A673 (cell line): ENCODE measurements at regions of chr17 and their contacts with region 1.

Region 1: DNA sequence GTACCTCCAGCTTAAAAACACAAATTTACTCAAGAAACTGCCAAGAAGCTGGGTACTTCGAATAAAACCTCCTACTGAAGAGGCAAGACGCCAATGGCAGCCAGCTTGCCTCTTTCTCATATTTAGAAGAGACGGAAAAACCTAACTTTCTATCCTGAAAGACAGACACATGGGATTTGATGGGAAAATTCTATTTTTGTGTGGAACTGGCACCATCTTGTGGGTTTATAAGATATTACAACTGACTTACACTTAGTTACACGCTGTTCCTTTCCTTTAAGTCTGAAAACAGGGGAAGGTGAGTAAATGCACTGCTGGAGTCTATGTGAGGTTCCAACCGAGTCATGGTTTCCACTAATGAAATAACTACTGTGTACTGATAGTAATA is 10.3 kb downstream of the ZNF18 start:
- DNase-seq: peak; percentile 69
- H3K4me3 ChIP-seq: no peak overlapping the region
- H3K27ac ChIP-seq: no peak overlapping the region
- H3K4me1 ChIP-seq: peaks cover 10% of the 10 kb centered on the region
- H3K27me3 ChIP-seq: no peaks in the 10 kb centered on the region
- CTCF ChIP-seq: peak; percentile 63

Region 2: DNA sequence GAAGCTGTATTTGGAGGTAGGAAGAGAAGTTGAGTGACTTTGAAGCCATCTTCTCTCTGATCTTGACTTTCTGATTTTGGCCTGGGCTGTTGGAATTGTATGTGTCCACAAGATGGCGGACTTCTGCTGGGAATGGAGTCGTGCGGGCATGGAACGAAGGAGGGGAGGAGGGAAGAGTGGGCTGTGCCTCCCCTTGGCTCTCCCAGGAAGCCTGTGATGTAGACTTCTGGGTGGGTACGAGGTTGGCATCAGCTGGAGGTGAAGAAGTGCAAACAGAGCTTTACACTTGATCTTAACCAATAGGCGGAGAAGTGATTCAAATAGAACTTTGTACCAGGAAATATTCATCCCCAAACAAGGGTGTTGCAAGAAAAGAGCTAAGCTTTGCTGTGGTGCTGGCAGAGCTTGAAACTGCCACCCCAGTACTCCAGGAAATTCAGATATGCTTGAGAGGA is 1249.7 kb before region 1 on chr17:
- CTCF ChIA-PET with region 1: no interaction called
- POLR2A ChIA-PET with region 1: no interaction called
- intact Hi-C with region 1: loop called (anchors 5 kb)
- DNase-seq: peak; percentile 79
- H3K4me3 ChIP-seq: no peak overlapping the region
- H3K27ac ChIP-seq: no peak overlapping the region
- H3K4me1 ChIP-seq: no peaks in the 10 kb centered on the region
- H3K27me3 ChIP-seq: peaks cover 8% of the 10 kb centered on the region
- CTCF ChIP-seq: peak; percentile 90

Region 3: GRCh38 chr17:10754109-10754508 is 1232.8 kb before region 1 on chr17:
- CTCF ChIA-PET with region 1: no interaction called
- POLR2A ChIA-PET with region 1: no interaction called
- intact Hi-C with region 1: loop called (anchors 5 kb)
- DNase-seq: peak; percentile 59
- H3K4me3 ChIP-seq: no peak overlapping the region
- H3K27ac ChIP-seq: no peak overlapping the region
- H3K4me1 ChIP-seq: no peaks in the 10 kb centered on the region
- H3K27me3 ChIP-seq: peaks cover 57% of the 10 kb centered on the region
- CTCF ChIP-seq: peak; percentile 60

Region 4: DNA sequence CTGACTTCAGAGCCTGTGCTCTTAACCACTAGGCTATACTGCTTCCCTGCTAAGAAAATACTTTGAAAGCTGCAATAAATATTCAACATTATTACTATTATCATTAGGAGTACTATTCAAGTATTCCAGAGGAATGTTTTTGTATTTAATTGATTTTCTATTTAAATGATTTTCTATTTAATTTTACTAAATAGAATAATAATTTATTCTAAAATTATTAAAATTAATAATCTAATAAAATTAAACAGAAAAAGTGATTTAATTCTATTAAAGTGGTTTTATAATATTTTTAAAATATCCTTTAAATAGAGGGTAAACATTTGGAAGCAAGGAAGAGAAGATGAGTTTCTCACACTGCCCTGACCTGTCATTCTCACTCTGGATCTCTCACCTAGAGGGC is 214.9 kb before region 1 on chr17:
- CTCF ChIA-PET with region 1: no interaction called
- POLR2A ChIA-PET with region 1: no interaction called
- intact Hi-C with region 1: no loop called
- DNase-seq: no peak
- H3K4me3 ChIP-seq: no peak overlapping the region
- H3K27ac ChIP-seq: no peak overlapping the region
- H3K4me1 ChIP-seq: no peaks in the 10 kb centered on the region
- H3K27me3 ChIP-seq: no peaks in the 10 kb centered on the region
- CTCF ChIP-seq: no peak